HAP-1 (cell line): ENCODE measurements at regions of chr20 and their contacts with region 1.

Region 1: GRCh38 chr20:49982346-49983122 is at the start of gene SNAI1:
- DNase-seq: peak; percentile 73 to 89
- H3K4me3 ChIP-seq: peak within 1 kb of the TSS; percentile 36
- H3K4me1 ChIP-seq: peaks cover 33% of the 10 kb centered on the region
- H3K27me3 ChIP-seq: no peaks in the 10 kb centered on the region

Region 2: GRCh38 chr20:50070991-50071888 is 88.7 kb after region 1 on chr20:
- in situ Hi-C with region 1: loop called (anchors 5 kb)
- DNase-seq: peak; percentile 78 to 95
- H3K4me3 ChIP-seq: peak overlapping the region; percentile 26
- H3K4me1 ChIP-seq: peaks cover 3% of the 10 kb centered on the region; the same call in 1 of the 2 replicates
- H3K27me3 ChIP-seq: no peaks in the 10 kb centered on the region

Region 3: DNA sequence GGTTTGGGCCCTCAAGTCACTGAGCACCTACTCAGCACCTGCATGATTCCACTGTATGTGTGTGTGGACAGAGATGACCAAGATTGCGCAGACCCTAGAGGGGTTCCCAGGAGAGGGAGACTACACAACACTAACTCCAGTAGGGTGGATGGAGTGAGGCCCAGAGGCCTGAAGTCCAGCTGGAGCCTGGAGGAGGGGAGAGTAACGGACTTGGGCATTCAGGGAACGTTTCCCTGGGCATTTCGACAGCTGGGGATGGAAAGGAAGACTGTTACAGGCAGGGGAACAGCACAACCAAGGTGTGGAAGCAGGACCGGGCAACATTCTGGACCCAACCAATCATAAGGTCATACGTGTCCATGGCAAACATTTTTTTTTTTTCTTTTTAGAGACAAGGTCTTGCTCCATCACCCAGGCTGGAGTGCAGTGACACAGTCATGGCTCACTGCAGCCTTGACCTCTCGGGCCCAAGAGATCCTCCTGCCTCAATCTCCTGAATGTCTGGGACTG is 197.0 kb after region 1 on chr20:
- in situ Hi-C with region 1: loop called (anchors 5 kb)
- DNase-seq: no peak
- H3K4me3 ChIP-seq: no peak overlapping the region
- H3K4me1 ChIP-seq: no peaks in the 10 kb centered on the region
- H3K27me3 ChIP-seq: no peaks in the 10 kb centered on the region

Region 4: DNA sequence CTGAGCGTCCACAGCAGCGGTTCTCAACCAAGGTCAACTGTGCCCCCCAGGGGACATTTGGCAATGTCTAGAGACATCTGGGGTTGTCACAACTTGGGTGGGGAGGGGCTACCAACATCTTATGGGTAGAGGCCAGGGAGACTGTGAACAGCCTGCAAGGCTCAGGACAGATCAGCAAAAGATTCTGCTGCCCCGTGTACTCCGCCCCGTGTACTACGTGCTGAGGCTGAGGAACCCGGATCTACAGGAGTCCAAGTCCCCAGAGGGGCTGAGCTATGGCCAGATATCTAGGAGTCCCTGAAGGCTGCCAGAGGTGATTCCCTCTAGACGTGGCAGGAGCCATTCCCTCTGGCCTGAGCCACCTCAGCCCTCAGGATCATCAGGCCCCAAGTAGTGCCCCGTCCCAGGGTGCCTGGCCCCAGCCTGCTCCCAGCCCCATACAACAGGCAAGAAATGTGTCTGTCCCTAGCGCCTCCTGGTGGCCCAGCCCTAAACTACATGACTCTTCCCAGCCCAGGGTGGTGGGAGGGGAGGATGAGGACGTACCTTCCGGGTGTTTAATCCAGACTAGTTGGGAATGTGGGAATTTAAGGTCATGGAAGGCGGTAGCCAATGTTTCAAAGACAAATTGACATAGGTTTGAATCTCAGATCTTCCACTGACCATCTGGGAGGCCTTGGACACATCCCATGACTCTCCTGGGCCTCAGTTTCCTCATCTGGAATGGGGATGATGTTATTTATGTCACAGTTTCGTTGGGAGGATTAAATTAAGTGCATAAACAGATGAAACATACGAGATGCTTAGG is 478.1 kb after region 1 on chr20:
- in situ Hi-C with region 1: loop called (anchors 10 kb)
- DNase-seq: peak; percentile 37 to 92
- H3K4me3 ChIP-seq: no peak overlapping the region
- H3K4me1 ChIP-seq: peaks cover 6% of the 10 kb centered on the region
- H3K27me3 ChIP-seq: no peaks in the 10 kb centered on the region